Activated B cell treated with CpG ODN at 0.5 μM for 24 hours (primary cell): ENCODE measurements at regions of chr3 and their contacts with region 1.

Region 1: GRCh38 chr3:43286115-43286840 is at the start of gene SNRK:
- DNase-seq: peak; percentile 98
- ATAC-seq: peak; percentile 88
- H3K4me3 Mint-ChIP-seq: peak within 1 kb of the TSS; percentile 97
- H3K27ac Mint-ChIP-seq: peak within 1 kb of the TSS; percentile 95
- H3K4me1 Mint-ChIP-seq: peaks cover 49% of the 10 kb centered on the region
- H3K27me3 Mint-ChIP-seq: no peaks in the 10 kb centered on the region
- CTCF ChIP-seq: no peak
- total RNA-seq, gene SNRK: 31.1 TPM in 2 replicates

Region 2: GRCh38 chr3:42804106-42804830 is 482.0 kb before region 1 on chr3 and contains the start of gene HIGD1A:
- CTCF ChIA-PET with region 1: no interaction called
- POLR2A ChIA-PET with region 1: no interaction called
- intact Hi-C with region 1: loop called (anchors 10 kb)
- DNase-seq: peak; percentile 83
- ATAC-seq: peak; percentile 99
- H3K4me3 Mint-ChIP-seq: peak within 1 kb of the TSS; percentile 97
- H3K27ac Mint-ChIP-seq: peak within 1 kb of the TSS; percentile 87
- H3K4me1 Mint-ChIP-seq: peaks cover 41% of the 10 kb centered on the region
- H3K27me3 Mint-ChIP-seq: peaks cover 6% of the 10 kb centered on the region
- CTCF ChIP-seq: no peak
- total RNA-seq, gene HIGD1A: 35.9 and 38.2 TPM in 2 replicates

Region 3: DNA sequence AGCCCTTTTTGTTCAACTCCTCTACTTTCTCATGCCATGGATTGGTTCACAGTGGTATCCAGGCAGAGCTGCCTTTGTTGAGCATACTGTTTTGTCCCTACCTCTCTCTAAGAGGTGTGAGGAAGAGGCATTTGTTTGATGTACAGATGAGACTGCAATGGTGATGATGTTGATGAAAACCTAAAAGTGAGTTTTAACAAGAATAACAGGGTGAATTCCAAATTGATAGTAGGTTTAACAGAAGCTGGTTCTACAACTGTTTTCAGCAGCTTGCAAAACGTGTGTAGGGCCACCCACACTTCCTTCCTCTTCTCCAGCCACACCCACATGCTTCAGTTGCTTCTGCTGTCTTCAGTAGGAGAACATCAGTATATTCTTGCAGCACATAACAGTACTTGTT is 10.3 kb after region 1 on chr3:
- CTCF ChIA-PET with region 1: interaction called, 5 read pairs
- POLR2A ChIA-PET with region 1: interaction called, 22 read pairs
- intact Hi-C with region 1: loop called (anchors 1 kb)
- DNase-seq: no peak
- ATAC-seq: peak; percentile 98
- H3K4me3 Mint-ChIP-seq: peak overlapping the region; percentile 60
- H3K27ac Mint-ChIP-seq: peak overlapping the region; percentile 79
- H3K4me1 Mint-ChIP-seq: peaks cover 74% of the 10 kb centered on the region
- H3K27me3 Mint-ChIP-seq: no peaks in the 10 kb centered on the region
- CTCF ChIP-seq: no peak

Region 4: GRCh38 chr3:43378066-43378935 is 92.0 kb after region 1 on chr3:
- CTCF ChIA-PET with region 1: no interaction called
- POLR2A ChIA-PET with region 1: no interaction called
- intact Hi-C with region 1: loop called (anchors 1 kb)
- DNase-seq: no peak
- ATAC-seq: peak; percentile 52
- H3K4me3 Mint-ChIP-seq: no peak overlapping the region
- H3K27ac Mint-ChIP-seq: no peak overlapping the region
- H3K4me1 Mint-ChIP-seq: no peaks in the 10 kb centered on the region
- H3K27me3 Mint-ChIP-seq: peaks cover 3% of the 10 kb centered on the region
- CTCF ChIP-seq: peak; percentile 79

Region 5: GRCh38 chr3:44510000-44510368 is 1223.7 kb after region 1 on chr3:
- CTCF ChIA-PET with region 1: no interaction called
- POLR2A ChIA-PET with region 1: no interaction called
- intact Hi-C with region 1: loop called (anchors 5 kb)
- DNase-seq: no peak
- ATAC-seq: peak; percentile 30
- H3K4me3 Mint-ChIP-seq: peak overlapping the region; percentile 95
- H3K27ac Mint-ChIP-seq: peak overlapping the region; percentile 92
- H3K4me1 Mint-ChIP-seq: peaks cover 40% of the 10 kb centered on the region
- H3K27me3 Mint-ChIP-seq: no peaks in the 10 kb centered on the region
- CTCF ChIP-seq: no peak

Region 6: GRCh38 chr3:44976002-44976815 is 1689.9 kb after region 1 on chr3 and contains the starts of genes EXOSC7 and ZDHHC3:
- CTCF ChIA-PET with region 1: no interaction called
- POLR2A ChIA-PET with region 1: no interaction called
- intact Hi-C with region 1: loop called (anchors 5 kb)
- DNase-seq: peak; percentile 76
- ATAC-seq: peak; percentile 94
- H3K4me3 Mint-ChIP-seq: peak within 1 kb of the TSS; percentile 93
- H3K27ac Mint-ChIP-seq: peak within 1 kb of the TSS; percentile 88
- H3K4me1 Mint-ChIP-seq: peaks cover 49% of the 10 kb centered on the region
- H3K27me3 Mint-ChIP-seq: no peaks in the 10 kb centered on the region
- CTCF ChIP-seq: no peak
- total RNA-seq, gene EXOSC7: 42.5 and 44.0 TPM in 2 replicates
- total RNA-seq, gene ZDHHC3: 38.5 and 43.4 TPM in 2 replicates